ENCODE measurements at regions of chr1 and their contacts with region 1.

Region 1: DNA sequence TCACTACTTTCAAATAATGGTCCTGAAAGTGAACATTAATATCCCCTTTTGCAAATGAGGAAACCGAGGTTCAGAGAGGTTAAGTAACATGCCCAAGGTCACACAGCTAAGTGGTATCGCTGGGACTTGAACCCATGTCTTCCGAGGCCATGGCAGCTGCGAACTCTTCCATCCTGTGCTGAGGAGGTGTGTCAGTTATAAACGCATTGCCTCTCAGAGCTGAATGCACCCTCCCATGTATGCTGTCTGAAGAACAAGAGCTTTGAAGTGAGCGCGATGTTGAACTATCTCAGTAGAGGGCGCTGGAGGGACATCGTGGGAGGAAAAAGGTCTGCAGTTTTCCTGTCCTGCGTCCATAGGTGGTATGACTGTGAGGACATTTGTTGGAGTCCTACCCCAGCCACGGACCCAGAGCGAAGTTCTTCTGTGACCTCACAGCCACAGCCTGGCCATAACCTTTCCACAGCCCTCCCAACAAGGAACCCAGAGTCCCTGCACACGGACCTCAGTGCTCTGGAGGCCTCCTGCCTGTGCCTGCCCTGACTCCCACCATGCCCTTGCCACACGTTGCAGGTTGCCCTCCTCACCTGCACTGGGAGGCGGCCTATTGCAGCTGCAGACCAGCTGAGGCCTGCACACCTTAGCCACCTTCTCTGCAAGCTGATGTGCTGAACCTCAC is 7.5 kb downstream of the MYOC start:
- H3K4me3 ChIP-seq: peak overlapping the region; percentile 3; the same call in 1 of the 2 replicates
- H3K27ac ChIP-seq: no peak overlapping the region
- H3K4me1 ChIP-seq: no peaks in the 10 kb centered on the region
- CTCF ChIP-seq: peak; percentile 88

Region 2: GRCh38 chr1:171654942-171655745 is 10.2 kb after region 1 on chr1:
- CTCF ChIA-PET with region 1: interaction called, 33 read pairs
- POLR2A ChIA-PET with region 1: no interaction called
- H3K4me3 ChIP-seq: no peak overlapping the region
- H3K27ac ChIP-seq: no peak overlapping the region
- H3K4me1 ChIP-seq: no peaks in the 10 kb centered on the region
- CTCF ChIP-seq: peak; percentile 41; the same call in 1 of the 2 replicates

Region 3: DNA sequence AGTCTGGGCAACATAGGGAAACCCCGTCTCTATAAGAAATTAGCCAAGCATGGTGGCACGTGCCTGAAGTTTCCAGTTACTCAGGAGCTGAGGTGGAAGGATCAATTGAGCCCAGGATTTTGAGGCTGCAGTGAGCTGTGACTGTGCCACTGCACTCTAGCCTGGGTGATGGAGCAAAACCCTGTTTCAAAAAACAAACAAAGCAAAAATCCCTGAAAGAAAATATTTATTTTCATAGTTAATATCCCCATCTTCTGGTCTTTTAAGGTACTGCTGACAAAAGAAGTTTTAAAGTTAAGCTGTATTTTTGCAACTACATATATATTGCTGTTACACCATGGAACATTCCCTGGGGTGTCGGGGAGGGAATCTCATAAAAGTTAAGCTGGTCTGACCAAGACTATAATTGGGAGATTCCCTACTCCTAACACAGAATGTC is 70.9 kb after region 1 on chr1:
- CTCF ChIA-PET with region 1: interaction called, 45 read pairs
- POLR2A ChIA-PET with region 1: no interaction called
- H3K4me3 ChIP-seq: no peak overlapping the region
- H3K27ac ChIP-seq: no peak overlapping the region
- H3K4me1 ChIP-seq: no peaks in the 10 kb centered on the region
- CTCF ChIP-seq: no peak

Measured in HEK293 (cell line).